ENCODE measurements at regions of chr2 and their contacts with region 1.

Region 1: DNA sequence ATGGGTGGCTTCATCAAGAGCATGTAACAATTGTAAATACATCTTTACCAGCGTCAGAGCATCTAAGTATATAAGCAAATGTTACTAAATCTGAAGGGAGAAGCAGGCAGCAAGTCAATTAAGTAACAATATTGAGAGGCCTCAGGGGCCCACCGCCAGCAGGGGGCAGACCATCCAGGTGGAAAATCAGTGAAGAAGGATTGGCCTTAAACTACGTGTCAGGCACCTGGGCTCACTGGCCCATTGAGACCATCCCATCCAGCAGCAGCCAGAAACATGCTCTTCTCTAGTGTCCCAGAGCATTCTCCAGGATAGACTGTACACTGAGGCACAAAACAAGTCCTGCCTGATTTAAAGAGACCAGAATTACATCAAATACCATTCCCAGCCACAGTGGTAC is 96.2 kb upstream of the SNTG2 start:
- DNase-seq: peak in 1 of 2 experiments; percentile 95
- H3K4me3 ChIP-seq: no peak overlapping the region
- H3K27ac ChIP-seq: no peak overlapping the region
- H3K4me1 ChIP-seq: no peaks in the 10 kb centered on the region
- H3K27me3 ChIP-seq: peaks cover 0 to 3% (median under 1%) of the 10 kb centered on the region in 4 experiments; a peak in 2 of 7 replicates
- CTCF ChIP-seq: peak; percentile 83 to 85 (median 85)
- EP300 ChIP-seq: no peak
- POLR2A ChIP-seq: no peak
- RAD21 ChIP-seq: peak; percentile 77 to 82

Region 2: GRCh38 chr2:903229-903900 is 48.9 kb after region 1 on chr2:
- CTCF ChIA-PET with region 1: interaction called, 18 read pairs
- POLR2A ChIA-PET with region 1: no interaction called
- DNase-seq: peak in 1 of 2 experiments; percentile 42
- H3K4me3 ChIP-seq: peak overlapping the region in 1 of 4 experiments; percentile 12; a peak in 1 of 8 replicates
- H3K27ac ChIP-seq: no peak overlapping the region
- H3K4me1 ChIP-seq: peaks cover 8 to 19% (median 14%) of the 10 kb centered on the region in 4 experiments
- H3K27me3 ChIP-seq: 0 out of 7 replicates have a peak, but pooled peaks cover 0 to 3% (median 1%) of the 10 kb centered on the region in 4 experiments
- CTCF ChIP-seq: peak in 1 of 3 experiments; percentile 21; a peak in 1 of 4 replicates
- EP300 ChIP-seq: no peak
- POLR2A ChIP-seq: no peak
- RAD21 ChIP-seq: peak; percentile 47 to 53

Region 3: GRCh38 chr2:1544478-1545069 is 690.1 kb after region 1 on chr2:
- CTCF ChIA-PET with region 1: interaction called, 10 read pairs
- POLR2A ChIA-PET with region 1: no interaction called
- DNase-seq: no peak
- H3K4me3 ChIP-seq: no peak overlapping the region
- H3K27ac ChIP-seq: no peak overlapping the region
- H3K4me1 ChIP-seq: no peaks in the 10 kb centered on the region
- H3K27me3 ChIP-seq: no peaks in the 10 kb centered on the region
- CTCF ChIP-seq: no peak
- EP300 ChIP-seq: no peak
- POLR2A ChIP-seq: no peak
- RAD21 ChIP-seq: no peak